ENCODE measurements at regions of chr5 and their contacts with region 1.

Region 1: GRCh38 chr5:40386289-40386688 is 293.4 kb upstream of the PTGER4 start:
- DNase-seq: peak; percentile 19
- H3K4me3 Mint-ChIP-seq: no peak overlapping the region
- H3K27ac Mint-ChIP-seq: peak overlapping the region; percentile 19
- H3K4me1 Mint-ChIP-seq: peaks cover 88% of the 10 kb centered on the region
- H3K27me3 Mint-ChIP-seq: no peaks in the 10 kb centered on the region

Region 2: GRCh38 chr5:39714036-39714698 is 672.1 kb before region 1 on chr5:
- intact Hi-C with region 1: loop called (anchors 10 kb)
- DNase-seq: no peak
- H3K4me3 Mint-ChIP-seq: no peak overlapping the region
- H3K27ac Mint-ChIP-seq: no peak overlapping the region
- H3K4me1 Mint-ChIP-seq: no peaks in the 10 kb centered on the region
- H3K27me3 Mint-ChIP-seq: peaks cover 5% of the 10 kb centered on the region

Region 3: GRCh38 chr5:40165794-40166728 is 220.2 kb before region 1 on chr5:
- intact Hi-C with region 1: loop called (anchors 2 kb)
- DNase-seq: no peak
- H3K4me3 Mint-ChIP-seq: no peak overlapping the region
- H3K27ac Mint-ChIP-seq: no peak overlapping the region
- H3K4me1 Mint-ChIP-seq: peaks cover 17% of the 10 kb centered on the region
- H3K27me3 Mint-ChIP-seq: no peaks in the 10 kb centered on the region

Region 4: GRCh38 chr5:40333459-40334244 is 52.6 kb before region 1 on chr5:
- intact Hi-C with region 1: loop called (anchors 1 kb)
- DNase-seq: no peak
- H3K4me3 Mint-ChIP-seq: no peak overlapping the region
- H3K27ac Mint-ChIP-seq: peak overlapping the region; percentile 27
- H3K4me1 Mint-ChIP-seq: peaks cover 43% of the 10 kb centered on the region
- H3K27me3 Mint-ChIP-seq: no peaks in the 10 kb centered on the region

Region 5: DNA sequence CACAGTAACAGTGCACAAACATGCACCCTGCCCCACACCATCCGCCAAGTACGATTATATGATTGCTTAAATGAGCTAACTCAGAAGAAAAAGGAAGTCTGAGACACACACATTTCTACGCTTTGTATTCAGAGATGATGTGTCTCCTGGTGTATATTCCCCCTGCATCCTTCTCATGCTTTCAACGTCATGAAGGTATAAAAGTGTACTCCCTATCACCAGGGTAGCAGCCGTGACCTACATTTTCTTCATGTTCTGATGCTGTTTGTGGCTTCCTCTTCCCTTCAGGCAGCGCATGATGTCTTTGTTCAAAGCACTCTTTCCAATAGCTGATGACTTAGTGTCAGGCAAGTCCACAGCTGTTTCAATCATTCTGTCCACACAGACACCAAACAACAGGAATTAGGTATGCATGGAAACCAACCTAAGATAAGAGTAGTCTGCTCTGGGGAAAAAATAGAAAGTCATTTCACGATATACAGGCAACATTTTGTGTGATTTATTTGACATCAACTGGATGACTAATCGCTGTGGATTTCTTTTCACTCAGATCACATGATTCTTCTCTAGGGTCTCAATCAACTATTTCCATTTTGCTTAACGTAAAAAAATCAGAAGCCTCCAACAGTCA is 24.1 kb after region 1 on chr5:
- intact Hi-C with region 1: loop called (anchors 1 kb)
- DNase-seq: peak; percentile 76
- H3K4me3 Mint-ChIP-seq: peak overlapping the region; percentile 72
- H3K27ac Mint-ChIP-seq: peak overlapping the region; percentile 95
- H3K4me1 Mint-ChIP-seq: peaks cover 70% of the 10 kb centered on the region
- H3K27me3 Mint-ChIP-seq: no peaks in the 10 kb centered on the region

Region 6: DNA sequence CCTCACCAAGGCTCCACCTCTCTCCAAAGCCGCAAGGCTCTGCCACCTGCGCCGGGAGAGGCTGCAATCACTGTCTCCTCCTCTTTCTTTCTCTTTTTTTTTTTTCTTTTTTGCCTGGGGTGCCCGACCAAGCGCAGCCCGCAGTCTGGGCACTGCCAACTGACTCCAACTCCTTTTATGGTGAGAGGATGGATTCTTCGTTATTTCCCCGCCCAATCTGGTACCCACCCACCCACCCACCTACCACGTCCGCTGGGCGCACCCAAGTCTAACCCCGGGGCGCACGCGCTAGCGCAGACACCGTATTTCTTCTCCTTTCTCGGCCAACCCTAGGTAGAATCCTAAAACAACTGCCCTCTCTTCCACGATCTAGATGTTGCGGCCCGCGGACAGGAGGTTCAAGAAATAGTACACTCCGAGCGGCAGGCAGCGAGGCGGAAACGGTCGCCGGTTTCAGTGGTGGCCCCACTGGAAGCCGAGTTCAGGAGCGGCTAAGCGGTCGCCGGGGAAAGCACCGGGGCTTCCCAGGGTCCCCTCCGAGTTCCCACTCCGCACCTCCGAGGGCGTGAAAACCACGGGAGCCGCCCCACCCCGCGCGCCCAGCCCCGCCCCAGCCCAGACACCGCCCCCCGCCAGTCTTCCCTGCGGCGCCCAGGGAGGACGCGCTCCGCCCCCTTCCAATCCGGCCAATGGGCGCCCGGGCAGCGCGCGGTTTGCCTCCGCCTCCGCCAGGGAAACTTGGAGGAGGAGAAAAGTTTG is 293.0 kb after region 1 on chr5:
- intact Hi-C with region 1: loop called (anchors 1 kb)
- DNase-seq: peak; percentile 91
- H3K4me3 Mint-ChIP-seq: peak overlapping the region; percentile 99
- H3K27ac Mint-ChIP-seq: peak overlapping the region; percentile 99
- H3K4me1 Mint-ChIP-seq: peaks cover 66% of the 10 kb centered on the region
- H3K27me3 Mint-ChIP-seq: no peaks in the 10 kb centered on the region

Measured in activated T-helper 1 cell treated with anti-CD3 and anti-CD28 coated beads, Interleukin-12 subunit alpha, Interleukin-12 subunit beta, Interleukin-2, Interleukin-4 antibody, amounts not matched to agents 30 ng/mL and 10 ng/mL and 1 ng/mL, durations not matched to agents 14 hours and 24 hours and 36 hours (primary cell).